A673 (cell line): ENCODE measurements at regions of chr1 and their contacts with region 1.

Region 1: DNA sequence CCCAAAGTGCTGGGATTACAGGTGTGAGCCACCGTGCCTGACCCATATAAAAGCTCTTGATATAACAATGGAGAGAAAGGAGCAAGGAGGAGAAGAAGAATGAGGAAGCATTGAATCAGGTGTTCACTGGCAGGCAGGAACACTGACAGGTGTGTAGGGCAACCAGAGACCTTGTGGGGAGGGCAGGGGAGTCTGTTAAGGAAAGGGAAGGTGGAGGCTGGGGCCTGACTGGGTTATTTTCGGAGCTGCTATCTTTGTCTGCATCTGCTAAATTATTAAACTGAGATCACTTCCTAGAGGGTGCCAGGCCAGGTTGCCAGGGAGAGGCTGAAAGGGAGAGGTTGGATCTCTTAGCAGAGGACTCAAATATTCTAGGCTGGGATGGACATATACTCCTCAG is 6.8 kb upstream of the TRNP1 start:
- DNase-seq: no peak
- H3K4me3 ChIP-seq: no peak overlapping the region
- H3K27ac ChIP-seq: no peak overlapping the region
- H3K4me1 ChIP-seq: no peaks in the 10 kb centered on the region
- H3K27me3 ChIP-seq: no peaks in the 10 kb centered on the region
- CTCF ChIP-seq: no peak

Region 2: GRCh38 chr1:26585471-26585870 is 401.2 kb before region 1 on chr1:
- CTCF ChIA-PET with region 1: no interaction called
- POLR2A ChIA-PET with region 1: interaction called, 12 read pairs
- intact Hi-C with region 1: no loop called
- DNase-seq: no peak
- H3K4me3 ChIP-seq: no peak overlapping the region
- H3K27ac ChIP-seq: no peak overlapping the region
- H3K4me1 ChIP-seq: no peaks in the 10 kb centered on the region
- H3K27me3 ChIP-seq: no peaks in the 10 kb centered on the region
- CTCF ChIP-seq: no peak

Region 3: GRCh38 chr1:26666855-26667254 is 319.8 kb before region 1 on chr1:
- CTCF ChIA-PET with region 1: no interaction called
- POLR2A ChIA-PET with region 1: no interaction called
- intact Hi-C with region 1: no loop called
- DNase-seq: no peak
- H3K4me3 ChIP-seq: no peak overlapping the region
- H3K27ac ChIP-seq: no peak overlapping the region
- H3K4me1 ChIP-seq: no peaks in the 10 kb centered on the region
- H3K27me3 ChIP-seq: no peaks in the 10 kb centered on the region
- CTCF ChIP-seq: no peak